ENCODE measurements at regions of chr2 and their contacts with region 1.

Region 1: DNA sequence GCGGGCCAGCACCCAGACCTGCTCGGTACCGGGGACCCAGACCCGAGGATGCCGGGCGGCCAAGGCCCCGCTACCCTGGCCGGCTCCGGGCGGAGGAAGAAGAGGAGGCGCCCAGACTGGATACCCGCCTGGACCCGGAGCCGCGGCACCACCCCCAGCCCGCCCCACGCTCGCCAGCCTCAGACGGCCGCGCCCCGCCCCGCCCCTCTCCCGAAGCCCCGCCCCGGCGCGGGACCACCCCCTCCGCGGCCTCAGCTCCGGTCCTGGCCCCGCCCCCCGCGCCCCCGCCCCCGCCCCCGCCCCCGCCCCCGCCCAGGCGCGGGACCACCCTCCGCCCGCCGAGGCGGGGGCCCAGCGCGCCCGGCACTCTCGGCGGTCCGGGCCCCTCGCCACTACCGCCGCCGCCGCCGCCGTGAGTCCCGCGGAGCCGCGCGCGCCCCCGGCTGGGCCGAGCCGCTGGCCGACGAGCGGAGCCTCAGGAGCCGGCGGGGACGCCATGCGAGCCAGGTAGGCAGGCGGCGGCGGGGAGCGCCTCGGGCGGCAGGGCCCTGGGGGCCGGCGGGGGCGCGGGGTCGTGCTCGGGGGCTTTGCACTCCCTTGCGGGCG is at the start of gene SH3BP4:
- DNase-seq: no peak
- ATAC-seq: peak; percentile 84
- H3K4me3 ChIP-seq: peak within 1 kb of the TSS; percentile 64 to 92
- H3K27ac ChIP-seq: peak within 1 kb of the TSS; percentile 99
- H3K4me1 ChIP-seq: peaks cover 39% of the 10 kb centered on the region
- H3K27me3 ChIP-seq: no peaks in the 10 kb centered on the region
- CTCF ChIP-seq: no peak; the same call in 1 of the 2 replicates
- total RNA-seq, gene SH3BP4: 133 TPM

Region 2: GRCh38 chr2:234998404-234999211 is 46.8 kb after region 1 on chr2:
- CTCF ChIA-PET with region 1: no interaction called
- POLR2A ChIA-PET with region 1: interaction called, 11 read pairs
- in situ Hi-C with region 1: no loop called
- intact Hi-C with region 1: no loop called
- DNase-seq: no peak
- ATAC-seq: no peak
- H3K4me3 ChIP-seq: no peak overlapping the region
- H3K27ac ChIP-seq: peak overlapping the region; percentile 71
- H3K4me1 ChIP-seq: peaks cover 82% of the 10 kb centered on the region
- H3K27me3 ChIP-seq: no peaks in the 10 kb centered on the region
- CTCF ChIP-seq: no peak

Measured in Panc1 (cell line).